ENCODE measurements at regions of chr16 and their contacts with region 1.

Region 1: GRCh38 chr16:48164907-48165726 is 9.3 kb upstream of the ABCC12 start:
- DNase-seq: peak; percentile 74 to 88
- ATAC-seq: peak; percentile 93 to 98 (median 94)
- H3K4me3 ChIP-seq: no peak overlapping the region
- H3K27ac ChIP-seq: no peak overlapping the region
- H3K4me1 ChIP-seq: no peaks in the 10 kb centered on the region
- H3K27me3 ChIP-seq: no peaks in the 10 kb centered on the region
- CTCF ChIP-seq: peak; percentile 89

Region 2: GRCh38 chr16:46929378-46930332 is 1235.5 kb before region 1 on chr16:
- intact Hi-C with region 1: loop called in 1 of 2 experiments (anchors 10 kb)
- DNase-seq: peak; percentile 71 to 88
- ATAC-seq: peak; percentile 78 to 88 (median 83)
- H3K4me3 ChIP-seq: no peak overlapping the region
- H3K27ac ChIP-seq: peak overlapping the region; percentile 36
- H3K4me1 ChIP-seq: peaks cover 18% of the 10 kb centered on the region
- H3K27me3 ChIP-seq: no peaks in the 10 kb centered on the region
- CTCF ChIP-seq: peak; percentile 88

Region 3: GRCh38 chr16:47037746-47038458 is 1127.2 kb before region 1 on chr16:
- intact Hi-C with region 1: loop called (anchors 2 to 5 kb)
- DNase-seq: peak; percentile 91 to 94
- ATAC-seq: peak; percentile 96 to 99 (median 97)
- H3K4me3 ChIP-seq: peak overlapping the region; percentile 71
- H3K27ac ChIP-seq: no peak overlapping the region
- H3K4me1 ChIP-seq: no peaks in the 10 kb centered on the region
- H3K27me3 ChIP-seq: no peaks in the 10 kb centered on the region
- CTCF ChIP-seq: peak; percentile 88

Region 4: GRCh38 chr16:47141773-47142485 is 1023.2 kb before region 1 on chr16:
- intact Hi-C with region 1: loop called in 1 of 2 experiments (anchors 5 kb)
- DNase-seq: peak; percentile 75 to 85
- ATAC-seq: peak; percentile 81 to 91 (median 89)
- H3K4me3 ChIP-seq: peak overlapping the region; percentile 74
- H3K27ac ChIP-seq: no peak overlapping the region
- H3K4me1 ChIP-seq: no peaks in the 10 kb centered on the region
- H3K27me3 ChIP-seq: no peaks in the 10 kb centered on the region
- CTCF ChIP-seq: peak; percentile 92